ENCODE measurements at regions of chr16 and their contacts with region 1.

Region 1: GRCh38 chr16:3045357-3045728 is 1.0 kb upstream of the MMP25 start:
- DNase-seq: peak; percentile 57
- H3K4me3 Mint-ChIP-seq: peak overlapping the region; percentile 76
- H3K27ac Mint-ChIP-seq: peak overlapping the region; percentile 81
- H3K4me1 Mint-ChIP-seq: peaks cover 31% of the 10 kb centered on the region
- H3K27me3 Mint-ChIP-seq: peaks cover 50% of the 10 kb centered on the region

Region 2: DNA sequence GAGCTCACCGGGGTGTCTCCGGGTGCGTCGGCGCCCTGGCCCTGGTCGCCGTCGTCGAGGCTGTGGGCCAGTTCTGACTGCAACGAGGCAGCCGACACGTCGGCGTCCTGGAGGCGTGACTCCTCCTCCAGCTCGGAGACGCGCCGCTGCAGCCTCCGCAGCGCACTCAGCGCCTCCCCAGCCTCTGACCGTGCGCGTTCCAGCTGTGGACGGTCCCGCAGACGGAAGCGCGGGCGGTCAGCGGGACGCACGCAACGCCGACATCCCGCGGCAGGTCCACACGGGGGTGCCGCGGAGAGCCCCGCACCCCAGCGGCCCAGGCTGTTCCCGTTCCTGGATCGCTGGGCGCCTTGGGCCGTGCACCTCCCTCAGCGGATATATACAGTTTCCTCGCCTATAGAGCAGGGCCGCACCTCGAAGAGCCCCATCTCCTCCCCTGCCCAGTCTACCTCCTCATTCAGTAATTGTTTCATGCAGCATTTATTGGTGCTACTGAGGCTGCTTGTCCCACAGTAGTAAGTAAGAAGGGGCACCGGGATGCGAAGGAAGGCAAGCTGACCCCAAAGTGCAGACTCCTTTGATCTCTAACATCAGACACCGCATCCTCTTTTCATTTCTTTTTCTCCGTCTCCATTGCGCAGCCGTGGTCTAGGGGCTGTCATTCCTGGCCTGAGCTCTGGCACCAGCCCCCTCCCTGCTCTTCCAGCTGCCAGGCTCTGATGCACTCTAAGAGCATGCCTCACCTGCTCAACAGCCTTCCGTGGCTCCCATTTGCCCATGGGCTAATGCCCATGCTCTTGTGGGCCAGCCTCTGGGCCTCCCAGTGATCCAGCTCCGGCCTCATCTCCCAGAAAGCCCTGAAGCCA is 15.6 kb before region 1 on chr16:
- CTCF ChIA-PET with region 1: interaction called, 119 read pairs
- POLR2A ChIA-PET with region 1: interaction called, 3 read pairs
- DNase-seq: peak; percentile 58
- H3K4me3 Mint-ChIP-seq: peak overlapping the region; percentile 60
- H3K27ac Mint-ChIP-seq: no peak overlapping the region
- H3K4me1 Mint-ChIP-seq: peaks cover 39% of the 10 kb centered on the region
- H3K27me3 Mint-ChIP-seq: peaks cover 46% of the 10 kb centered on the region

Region 3: GRCh38 chr16:3121851-3122467 is 76.6 kb after region 1 on chr16:
- CTCF ChIA-PET with region 1: no interaction called
- POLR2A ChIA-PET with region 1: no interaction called
- DNase-seq: no peak
- H3K4me3 Mint-ChIP-seq: no peak overlapping the region
- H3K27ac Mint-ChIP-seq: no peak overlapping the region
- H3K4me1 Mint-ChIP-seq: peaks cover 35% of the 10 kb centered on the region
- H3K27me3 Mint-ChIP-seq: no peaks in the 10 kb centered on the region